Activated T-helper 2 cell treated with anti-CD3 and anti-CD28 coated beads, Interferon-gamma antibody, Interleukin-2, Interleukin-4, amounts not matched to agents 10 μg/mL and 5 μg/mL and 100 μg/mL, durations not matched to agents 14 hours and 24 hours and 36 hours (primary cell): ENCODE measurements at regions of chr12 and their contacts with region 1.

Region 1: DNA sequence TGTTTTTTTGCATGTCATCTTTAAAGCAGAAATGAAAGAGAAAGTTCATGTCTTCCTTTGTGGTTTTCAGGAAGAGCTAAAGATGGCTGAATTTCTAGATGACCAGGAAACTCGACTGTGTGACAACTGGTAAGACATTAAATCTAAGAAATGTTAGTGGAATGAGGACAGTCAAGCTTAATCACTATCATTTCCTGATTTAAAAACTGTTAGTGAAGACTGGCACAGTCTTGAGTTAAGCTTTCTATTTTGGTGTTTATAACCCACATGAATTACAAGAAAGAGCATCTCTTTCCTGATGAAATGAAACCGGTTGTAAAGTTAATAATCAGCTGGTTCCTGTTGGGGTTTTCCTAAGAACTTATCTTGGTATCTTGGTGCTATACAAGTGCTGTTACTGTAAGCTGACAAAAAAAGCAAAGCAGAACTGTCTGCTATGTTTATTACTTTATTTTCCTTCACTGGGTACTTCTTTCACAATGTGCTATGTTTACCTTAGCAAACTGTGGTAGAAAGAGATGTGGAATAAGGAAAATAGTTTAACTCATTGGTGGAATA is 5.2 kb downstream of the TRAFD1 start:
- DNase-seq: no peak
- H3K4me3 Mint-ChIP-seq: peak overlapping the region; percentile 72
- H3K27ac Mint-ChIP-seq: peak overlapping the region; percentile 72
- H3K4me1 Mint-ChIP-seq: peaks cover 45% of the 10 kb centered on the region
- H3K27me3 Mint-ChIP-seq: no peaks in the 10 kb centered on the region

Region 2: GRCh38 chr12:111993292-111994150 is 137.0 kb before region 1 on chr12:
- intact Hi-C with region 1: loop called (anchors 1 kb)
- DNase-seq: peak; percentile 40
- H3K4me3 Mint-ChIP-seq: peak overlapping the region; percentile 79
- H3K27ac Mint-ChIP-seq: peak overlapping the region; percentile 44
- H3K4me1 Mint-ChIP-seq: peaks cover 58% of the 10 kb centered on the region
- H3K27me3 Mint-ChIP-seq: no peaks in the 10 kb centered on the region

Region 3: DNA sequence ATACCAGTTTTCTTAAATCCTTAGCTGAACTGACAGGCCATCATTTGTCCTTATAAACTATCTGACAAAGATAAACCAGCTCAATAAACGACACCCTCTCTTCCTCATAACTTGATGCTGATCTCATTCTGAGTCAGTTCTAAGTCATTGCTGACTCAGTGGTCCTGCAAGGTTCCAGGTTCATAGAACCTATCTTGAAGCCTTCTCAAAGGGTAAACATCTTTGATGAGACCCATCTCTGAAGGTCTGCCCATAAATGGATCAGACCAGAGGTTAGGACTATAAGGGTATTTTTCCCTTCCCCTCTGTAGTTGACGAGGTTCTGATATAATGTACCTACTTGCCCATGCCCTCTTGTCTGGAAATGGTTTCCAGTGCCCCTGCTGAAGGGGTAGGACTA is 33.9 kb before region 1 on chr12:
- intact Hi-C with region 1: loop called (anchors 5 kb)
- DNase-seq: no peak
- H3K4me3 Mint-ChIP-seq: peak overlapping the region; percentile 21
- H3K27ac Mint-ChIP-seq: peak overlapping the region; percentile 85
- H3K4me1 Mint-ChIP-seq: peaks cover 27% of the 10 kb centered on the region
- H3K27me3 Mint-ChIP-seq: no peaks in the 10 kb centered on the region

Region 4: DNA sequence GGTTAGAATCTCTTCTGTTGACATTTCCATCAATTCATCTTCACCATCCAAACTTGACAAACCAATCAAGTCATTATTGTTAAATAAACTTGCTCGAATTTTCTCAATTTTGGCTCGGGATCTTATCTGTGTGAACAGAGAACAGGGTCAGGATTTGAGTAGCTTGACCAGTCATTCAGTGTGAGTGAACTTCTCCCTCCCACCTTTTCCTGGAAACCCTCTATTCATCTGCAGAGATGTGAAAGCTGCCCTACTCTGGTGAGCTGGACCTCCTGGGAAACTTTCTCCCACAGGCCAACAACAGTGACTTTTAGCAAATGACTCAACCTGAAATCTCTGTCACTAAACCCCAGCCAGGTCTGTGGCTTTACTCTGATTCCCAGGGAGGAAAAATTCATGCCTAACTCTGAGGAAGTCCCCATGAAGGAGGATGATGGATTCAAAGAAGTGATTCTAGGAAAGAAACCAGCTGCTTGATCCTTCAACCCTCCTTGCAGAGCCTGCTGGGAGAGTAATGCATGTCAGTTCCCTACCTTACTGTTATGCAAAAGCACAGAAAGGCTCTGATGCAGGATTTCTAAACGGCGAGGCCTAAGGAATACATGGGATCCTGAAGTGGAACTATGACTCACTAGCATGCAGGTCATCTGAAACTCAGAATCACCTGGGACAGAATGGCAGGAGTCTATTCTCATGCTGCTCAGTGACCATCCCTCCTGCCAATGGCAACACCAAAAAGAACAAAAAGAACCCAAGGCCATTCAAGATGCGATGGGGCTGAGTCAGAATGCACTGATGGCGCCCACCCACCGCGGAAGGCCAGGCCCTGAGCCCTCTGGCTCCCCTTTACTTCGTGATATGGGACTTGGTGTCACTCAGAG is 52.9 kb after region 1 on chr12:
- intact Hi-C with region 1: loop called (anchors 1 kb)
- DNase-seq: no peak
- H3K4me3 Mint-ChIP-seq: no peak overlapping the region
- H3K27ac Mint-ChIP-seq: peak overlapping the region; percentile 13
- H3K4me1 Mint-ChIP-seq: peaks cover 11% of the 10 kb centered on the region
- H3K27me3 Mint-ChIP-seq: no peaks in the 10 kb centered on the region